Activated CD4-positive, alpha-beta T cell treated with anti-CD3 and anti-CD28 coated beads for 36 hours (primary cell): ENCODE measurements at regions of chr3 and their contacts with region 1.

Region 1: GRCh38 chr3:12556671-12557472 is at the start of gene MKRN2:
- DNase-seq: peak; percentile 91
- ATAC-seq: peak; percentile 86
- H3K4me3 Mint-ChIP-seq: peak within 1 kb of the TSS; percentile 87
- H3K27ac Mint-ChIP-seq: peak within 1 kb of the TSS; percentile 92
- H3K4me1 Mint-ChIP-seq: peaks cover 51% of the 10 kb centered on the region
- H3K27me3 Mint-ChIP-seq: peaks cover 22% of the 10 kb centered on the region
- total RNA-seq, gene MKRN2: 21.5 to 24.9 TPM

Region 2: GRCh38 chr3:11643605-11644087 is 913.2 kb before region 1 on chr3 and contains the start of gene VGLL4:
- CTCF ChIA-PET with region 1: no interaction called
- POLR2A ChIA-PET with region 1: no interaction called
- intact Hi-C with region 1: loop called in 1 of 2 experiments (anchors 5 kb)
- DNase-seq: peak; percentile 85
- ATAC-seq: peak; percentile 74
- H3K4me3 Mint-ChIP-seq: peak within 1 kb of the TSS; percentile 99
- H3K27ac Mint-ChIP-seq: peak within 1 kb of the TSS; percentile 99
- H3K4me1 Mint-ChIP-seq: peaks cover 33% of the 10 kb centered on the region
- H3K27me3 Mint-ChIP-seq: no peaks in the 10 kb centered on the region
- total RNA-seq, gene VGLL4: 24.4 to 24.9 TPM

Region 3: DNA sequence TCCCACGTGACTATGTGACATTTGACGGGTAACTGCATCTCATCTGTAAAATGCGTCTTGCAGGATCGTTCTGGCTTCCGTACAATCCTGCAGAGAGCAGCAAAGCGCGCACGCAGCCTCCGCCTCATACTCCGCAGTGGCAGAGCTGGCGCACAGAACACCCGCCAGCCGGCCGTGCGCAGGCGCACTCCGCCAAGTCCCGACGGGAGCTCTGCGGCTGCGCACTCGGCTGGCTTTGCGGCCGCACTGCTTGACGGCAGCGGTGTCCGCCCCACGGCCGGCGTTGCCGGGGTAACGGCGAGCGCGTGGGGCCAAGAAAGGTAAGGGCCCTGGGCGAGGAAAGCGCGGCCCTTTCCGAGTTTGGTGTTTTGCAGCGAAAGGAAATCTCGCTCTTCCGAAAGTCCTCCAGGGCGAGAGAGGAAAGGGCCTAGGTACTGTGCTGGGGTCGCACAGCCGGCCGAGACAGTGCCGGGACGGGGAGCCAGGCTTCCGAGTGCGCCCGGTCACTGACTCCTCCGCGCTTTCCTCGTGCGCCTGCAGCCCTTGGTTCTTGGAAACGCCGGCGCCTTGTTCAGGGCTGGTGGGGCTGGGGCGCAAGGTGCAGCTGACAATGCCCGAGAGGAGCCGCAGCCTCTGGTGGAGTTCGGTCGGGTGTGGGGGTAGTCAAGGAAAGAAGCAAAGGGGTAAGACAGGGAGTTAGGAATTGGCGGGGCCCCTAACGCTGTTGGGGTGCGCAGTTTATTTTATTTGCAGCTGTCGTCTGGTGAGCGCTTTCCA is 72.5 kb before region 1 on chr3 and contains the start of gene TSEN2:
- CTCF ChIA-PET with region 1: interaction called, 4 read pairs
- POLR2A ChIA-PET with region 1: interaction called, 3 read pairs
- intact Hi-C with region 1: loop called (anchors 1 kb)
- DNase-seq: peak; percentile 98
- ATAC-seq: peak; percentile 97
- H3K4me3 Mint-ChIP-seq: peak within 1 kb of the TSS; percentile 96
- H3K27ac Mint-ChIP-seq: peak within 1 kb of the TSS; percentile 97
- H3K4me1 Mint-ChIP-seq: peaks cover 42% of the 10 kb centered on the region
- H3K27me3 Mint-ChIP-seq: no peaks in the 10 kb centered on the region
- total RNA-seq, gene TSEN2: 17.8 to 19.4 TPM

Region 4: GRCh38 chr3:12663936-12664908 is 107.3 kb after region 1 on chr3 and contains the start of gene RAF1:
- CTCF ChIA-PET with region 1: interaction called, 7 read pairs
- POLR2A ChIA-PET with region 1: interaction called, 3 read pairs
- intact Hi-C with region 1: loop called (anchors 1 to 2 kb)
- DNase-seq: peak; percentile 99
- ATAC-seq: peak; percentile 94
- H3K4me3 Mint-ChIP-seq: peak within 1 kb of the TSS; percentile 81
- H3K27ac Mint-ChIP-seq: peak within 1 kb of the TSS; percentile 96
- H3K4me1 Mint-ChIP-seq: peaks cover 25% of the 10 kb centered on the region
- H3K27me3 Mint-ChIP-seq: no peaks in the 10 kb centered on the region
- total RNA-seq, gene RAF1: 66.8 to 74.7 TPM

Region 5: GRCh38 chr3:12841149-12841970 is 284.5 kb after region 1 on chr3 and contains the start of gene RPL32:
- CTCF ChIA-PET with region 1: no interaction called
- POLR2A ChIA-PET with region 1: no interaction called
- intact Hi-C with region 1: loop called in 1 of 2 experiments (anchors 1 kb)
- DNase-seq: peak; percentile 92
- ATAC-seq: peak; percentile 90
- H3K4me3 Mint-ChIP-seq: peak within 1 kb of the TSS; percentile 98
- H3K27ac Mint-ChIP-seq: peak within 1 kb of the TSS; percentile 99
- H3K4me1 Mint-ChIP-seq: peaks cover 43% of the 10 kb centered on the region
- H3K27me3 Mint-ChIP-seq: no peaks in the 10 kb centered on the region
- total RNA-seq, gene RPL32: 2,842 to 4,727 TPM

Region 6: GRCh38 chr3:12994607-12995388 is 437.9 kb after region 1 on chr3:
- CTCF ChIA-PET with region 1: no interaction called
- POLR2A ChIA-PET with region 1: no interaction called
- intact Hi-C with region 1: loop called in 1 of 2 experiments (anchors 5 kb)
- DNase-seq: peak; percentile 93
- ATAC-seq: peak; percentile 91
- H3K4me3 Mint-ChIP-seq: peak overlapping the region; percentile 90
- H3K27ac Mint-ChIP-seq: peak overlapping the region; percentile 81
- H3K4me1 Mint-ChIP-seq: peaks cover 56% of the 10 kb centered on the region
- H3K27me3 Mint-ChIP-seq: no peaks in the 10 kb centered on the region